ENCODE measurements at regions of chr5 and their contacts with region 1.

Region 1: GRCh38 chr5:141691867-141692532 is 10.0 kb upstream of the ARAP3 start:
- DNase-seq: peak; percentile 89
- ATAC-seq: peak; percentile 89
- H3K4me3 Mint-ChIP-seq: peak overlapping the region; percentile 71
- H3K27ac Mint-ChIP-seq: peak overlapping the region; percentile 75
- H3K4me1 Mint-ChIP-seq: peaks cover 28% of the 10 kb centered on the region
- H3K27me3 Mint-ChIP-seq: peaks cover 23% of the 10 kb centered on the region

Region 2: GRCh38 chr5:141681695-141682641 is 10.0 kb before region 1 on chr5 and contains the start of gene ARAP3:
- CTCF ChIA-PET with region 1: interaction called, 71 read pairs
- POLR2A ChIA-PET with region 1: interaction called, 6 read pairs
- DNase-seq: peak; percentile 54
- ATAC-seq: peak; percentile 86
- H3K4me3 Mint-ChIP-seq: peak within 1 kb of the TSS; percentile 79
- H3K27ac Mint-ChIP-seq: peak within 1 kb of the TSS; percentile 82
- H3K4me1 Mint-ChIP-seq: peaks cover 38% of the 10 kb centered on the region
- H3K27me3 Mint-ChIP-seq: peaks cover 3% of the 10 kb centered on the region
- total RNA-seq, gene ARAP3: 8.5 to 8.8 TPM

Region 3: DNA sequence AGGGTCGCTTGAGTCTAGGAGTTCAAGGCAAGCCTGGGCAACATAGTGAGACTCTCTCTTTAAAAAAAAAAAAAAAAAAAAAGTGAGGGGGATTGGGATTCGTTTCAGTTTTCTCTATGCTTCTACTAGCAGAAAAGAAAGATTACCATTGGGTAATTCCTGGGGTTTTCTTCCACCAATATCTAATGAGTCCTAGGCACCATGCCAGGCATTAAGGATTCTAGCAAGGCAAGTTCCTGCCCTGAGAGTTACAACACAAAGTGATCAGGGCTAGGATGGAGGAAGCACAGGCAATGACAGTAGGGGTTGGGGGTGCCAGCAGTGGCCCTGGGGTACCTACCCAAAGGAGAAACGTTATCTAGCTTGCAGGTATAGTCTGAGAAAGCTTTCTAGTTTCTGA is 95.4 kb after region 1 on chr5:
- CTCF ChIA-PET with region 1: no interaction called
- POLR2A ChIA-PET with region 1: no interaction called
- DNase-seq: no peak
- ATAC-seq: no peak
- H3K4me3 Mint-ChIP-seq: no peak overlapping the region
- H3K27ac Mint-ChIP-seq: no peak overlapping the region
- H3K4me1 Mint-ChIP-seq: no peaks in the 10 kb centered on the region
- H3K27me3 Mint-ChIP-seq: peaks cover 23% of the 10 kb centered on the region

Region 4: GRCh38 chr5:141914199-141914743 is 222.3 kb after region 1 on chr5:
- CTCF ChIA-PET with region 1: interaction called, 14 read pairs
- POLR2A ChIA-PET with region 1: no interaction called
- DNase-seq: no peak
- ATAC-seq: peak; percentile 88
- H3K4me3 Mint-ChIP-seq: peak overlapping the region; percentile 14
- H3K27ac Mint-ChIP-seq: no peak overlapping the region
- H3K4me1 Mint-ChIP-seq: peaks cover 8% of the 10 kb centered on the region
- H3K27me3 Mint-ChIP-seq: peaks cover 47% of the 10 kb centered on the region

Region 5: DNA sequence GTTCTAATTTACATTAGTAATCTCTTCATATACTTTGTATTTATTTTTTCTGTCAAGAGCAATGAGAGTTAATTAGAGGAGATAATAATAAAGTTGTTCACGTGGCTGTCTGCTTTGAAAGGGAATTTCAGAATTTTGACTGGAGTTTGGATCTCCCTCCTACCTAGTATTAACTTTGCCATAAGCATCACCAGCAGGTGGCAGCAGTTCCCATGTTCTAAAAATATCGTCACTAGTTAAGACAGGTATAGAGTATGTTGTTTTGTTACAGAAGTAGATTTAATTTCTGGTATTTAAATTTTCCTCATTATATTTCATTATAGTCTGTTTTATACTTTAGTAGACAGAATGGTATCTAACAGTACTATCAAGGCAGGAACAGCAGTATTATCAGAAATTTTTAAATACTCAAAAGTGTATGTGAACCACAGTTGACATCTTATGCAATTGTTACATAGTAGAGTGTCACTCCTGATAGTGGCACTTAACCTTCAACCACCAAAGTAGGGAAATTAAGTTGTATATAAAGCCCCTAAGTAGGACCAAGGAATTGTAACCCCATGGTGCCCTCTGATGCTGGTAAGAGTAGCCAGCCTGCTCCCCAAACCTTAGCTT is 300.5 kb after region 1 on chr5:
- CTCF ChIA-PET with region 1: interaction called, 12 read pairs
- POLR2A ChIA-PET with region 1: no interaction called
- DNase-seq: peak; percentile 87
- ATAC-seq: peak; percentile 91
- H3K4me3 Mint-ChIP-seq: no peak overlapping the region
- H3K27ac Mint-ChIP-seq: no peak overlapping the region
- H3K4me1 Mint-ChIP-seq: peaks cover 3% of the 10 kb centered on the region
- H3K27me3 Mint-ChIP-seq: no peaks in the 10 kb centered on the region

Measured in activated CD8-positive, alpha-beta T cell treated with anti-CD3 and anti-CD28 coated beads, Interleukin-2, amount 10 ng/mL, durations not matched to agents 7 days and 5 days (primary cell).